Stomach (tissue), 19 donors: ENCODE measurements at regions of chr18 and their contacts with region 1.

Region 1: DNA sequence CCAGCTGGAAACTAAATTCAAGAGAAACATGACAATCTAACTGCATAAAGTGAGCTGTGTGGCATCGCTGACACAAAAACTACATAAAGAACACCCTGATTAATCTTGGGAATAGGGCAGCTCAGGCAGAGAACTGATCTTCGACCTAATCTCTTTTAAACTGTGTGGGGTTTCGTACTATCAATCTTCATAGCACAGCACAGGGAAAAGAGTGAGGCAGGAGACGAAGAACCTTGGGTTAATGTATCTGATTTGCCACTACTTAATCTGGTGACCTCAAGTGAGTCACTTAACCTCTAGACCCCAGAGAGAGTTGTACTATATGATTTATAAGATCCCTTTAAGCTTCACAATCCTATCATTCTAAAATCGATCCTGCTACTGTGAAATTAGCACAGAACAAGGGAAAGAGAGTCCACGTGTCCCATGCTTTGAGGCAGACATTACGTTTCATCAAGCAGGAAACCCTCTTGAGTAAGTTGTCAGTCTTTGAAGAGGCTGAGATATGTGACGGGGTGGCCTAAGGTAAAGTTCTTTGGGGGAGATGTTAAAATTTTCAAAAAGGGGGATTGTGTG is 519.7 kb downstream of the SOCS6 start:
- DNase-seq: no peak
- H3K4me3 ChIP-seq: no peak overlapping the region
- H3K27ac ChIP-seq: no peak overlapping the region
- H3K4me1 ChIP-seq: no peaks in the 10 kb centered on the region
- H3K27me3 ChIP-seq: no peaks in the 10 kb centered on the region
- CTCF ChIP-seq: no peak
- EP300 ChIP-seq: no peak
- POLR2A ChIP-seq: no peak

Region 2: DNA sequence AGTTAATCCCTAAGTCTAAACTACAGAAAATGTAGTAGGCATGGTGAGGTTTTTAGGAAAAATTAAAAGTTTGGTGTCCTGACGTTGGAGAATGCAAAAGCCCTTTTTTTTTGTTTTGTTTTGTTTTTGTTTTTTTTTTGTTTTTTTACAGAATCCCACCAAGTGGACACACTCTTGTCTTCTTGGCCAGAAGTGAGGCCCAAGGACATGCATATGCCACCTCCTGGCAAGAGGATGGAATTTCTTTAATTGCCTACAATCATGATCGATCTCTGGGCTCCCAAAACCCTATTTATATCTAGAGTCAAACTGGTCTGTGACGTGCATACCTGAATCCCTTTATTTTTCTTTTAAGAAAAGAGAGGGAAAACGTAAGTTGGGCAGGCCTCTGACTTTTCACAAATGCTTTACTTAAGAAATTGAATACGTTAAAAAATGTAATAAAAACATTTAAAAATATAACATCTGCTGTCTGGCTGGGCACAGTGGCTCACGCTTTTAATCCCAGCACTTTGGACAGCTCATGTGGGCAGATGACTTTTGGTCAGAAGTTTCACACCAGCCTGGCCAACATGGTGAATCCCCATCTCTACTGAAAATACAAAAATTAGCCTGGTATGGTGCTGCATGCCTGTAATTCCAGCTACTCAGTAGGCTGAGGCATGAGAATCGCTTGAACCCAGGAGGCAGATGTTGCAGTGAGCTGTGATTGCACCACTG is 1232.9 kb after region 1 on chr18:
- intact Hi-C with region 1: loop called (anchors 10 kb)
- DNase-seq: no peak
- H3K4me3 ChIP-seq: no peak overlapping the region
- H3K27ac ChIP-seq: no peak overlapping the region
- H3K4me1 ChIP-seq: no peaks in the 10 kb centered on the region
- H3K27me3 ChIP-seq: no peaks in the 10 kb centered on the region
- CTCF ChIP-seq: no peak
- EP300 ChIP-seq: no peak
- POLR2A ChIP-seq: no peak